Left cardiac atrium (tissue), 4 donors: ENCODE measurements at regions of chr7 and their contacts with region 1.

Region 1: GRCh38 chr7:148962823-148963582 is 65.3 kb downstream of the PDIA4 start:
- DNase-seq: peak; percentile 68
- ATAC-seq: peak; percentile 84 to 88

Region 2: GRCh38 chr7:148262721-148263229 is 700.2 kb before region 1 on chr7:
- intact Hi-C with region 1: loop called in 1 of 2 experiments (anchors 10 kb)
- DNase-seq: peak; percentile 59
- ATAC-seq: peak; percentile 86 to 89

Region 3: GRCh38 chr7:148503875-148504487 is 459.0 kb before region 1 on chr7:
- intact Hi-C with region 1: loop called (anchors 2 to 5 kb)
- DNase-seq: no peak
- ATAC-seq: no peak

Region 4: GRCh38 chr7:148575640-148576411 is 387.2 kb before region 1 on chr7:
- intact Hi-C with region 1: loop called (anchors 5 to 10 kb)
- DNase-seq: peak; percentile 73
- ATAC-seq: peak; percentile 57 to 83

Region 5: DNA sequence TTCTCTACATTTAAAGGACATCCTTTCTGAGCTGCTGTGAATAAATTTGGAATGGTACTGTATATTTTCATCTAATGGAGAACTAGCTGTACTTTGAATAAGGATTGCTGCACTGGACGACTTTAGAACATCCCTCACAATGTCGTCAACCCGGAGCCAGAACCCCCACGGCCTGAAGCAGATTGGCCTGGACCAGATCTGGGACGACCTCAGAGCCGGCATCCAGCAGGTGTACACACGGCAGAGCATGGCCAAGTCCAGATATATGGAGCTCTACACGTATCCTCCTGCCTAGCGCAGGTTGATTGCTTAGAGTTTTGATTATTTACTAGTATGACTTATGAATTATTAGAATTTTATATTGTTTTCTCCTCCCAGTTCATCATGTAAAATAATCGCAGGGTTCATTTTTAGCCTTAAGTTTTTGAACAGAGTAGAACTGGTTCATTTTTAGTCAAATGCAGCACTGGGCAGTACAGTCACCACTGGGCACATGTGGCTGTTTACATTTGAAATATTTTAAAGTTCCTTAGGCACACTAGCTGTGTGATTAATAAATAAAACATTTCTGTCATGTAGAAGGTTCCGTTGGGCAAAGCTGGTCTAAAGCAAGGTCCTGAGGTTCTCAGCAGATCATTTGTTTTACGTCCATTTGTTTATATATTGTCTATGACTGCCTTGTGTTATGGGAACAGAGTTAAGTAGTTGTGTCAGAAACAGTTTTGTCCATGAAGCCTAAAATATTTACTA is 232.8 kb before region 1 on chr7:
- intact Hi-C with region 1: loop called in 1 of 2 experiments (anchors 5 kb)
- DNase-seq: no peak
- ATAC-seq: no peak

Region 6: DNA sequence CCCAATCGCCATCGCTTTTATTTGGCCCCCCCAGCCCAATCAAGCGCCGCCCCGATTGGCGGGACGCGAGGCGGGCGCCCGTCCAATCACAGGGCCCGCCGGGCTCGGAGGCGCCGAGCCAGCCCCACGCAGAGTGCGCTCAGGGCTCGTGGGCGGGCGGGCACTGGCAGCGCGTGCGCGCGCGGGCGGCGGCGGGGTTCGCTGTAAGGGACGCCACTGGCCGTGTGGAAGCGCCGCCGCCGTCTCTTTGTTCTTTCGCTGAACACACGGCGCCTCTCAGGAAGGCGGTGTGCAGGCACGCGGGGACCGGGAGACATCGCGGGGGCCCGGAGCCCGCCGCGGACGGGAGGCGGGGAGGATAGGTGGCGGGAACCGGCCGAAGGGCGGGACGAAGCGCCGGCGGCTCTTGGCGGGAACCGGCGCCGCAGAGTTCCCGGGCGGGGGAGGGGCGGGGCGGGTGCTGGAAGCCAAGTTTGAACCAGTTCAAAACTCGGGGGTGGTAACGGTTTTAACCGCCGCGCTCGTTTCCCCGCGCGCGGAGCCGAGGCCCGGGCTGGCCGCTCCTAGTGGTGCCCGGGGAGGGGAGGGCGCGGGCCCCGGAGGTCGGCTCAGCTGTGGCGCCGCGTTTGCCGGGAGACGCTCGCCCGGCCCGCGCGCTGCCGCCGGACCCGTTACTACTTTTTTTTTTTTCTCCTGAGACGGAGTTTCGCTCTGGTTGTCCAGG is 78.5 kb before region 1 on chr7:
- intact Hi-C with region 1: loop called in 1 of 2 experiments (anchors 10 kb)
- DNase-seq: peak; percentile 94
- ATAC-seq: peak; percentile 98 to 99